ENCODE measurements at regions of chr21 and their contacts with region 1.

Region 1: GRCh38 chr21:29232601-29233546 is 65.8 kb upstream of the BACH1 start:
- DNase-seq: peak; percentile 48
- H3K4me3 Mint-ChIP-seq: no peak overlapping the region
- H3K27ac Mint-ChIP-seq: peak overlapping the region; percentile 39
- H3K4me1 Mint-ChIP-seq: peaks cover 36% of the 10 kb centered on the region
- H3K27me3 Mint-ChIP-seq: peaks cover 25% of the 10 kb centered on the region

Region 2: DNA sequence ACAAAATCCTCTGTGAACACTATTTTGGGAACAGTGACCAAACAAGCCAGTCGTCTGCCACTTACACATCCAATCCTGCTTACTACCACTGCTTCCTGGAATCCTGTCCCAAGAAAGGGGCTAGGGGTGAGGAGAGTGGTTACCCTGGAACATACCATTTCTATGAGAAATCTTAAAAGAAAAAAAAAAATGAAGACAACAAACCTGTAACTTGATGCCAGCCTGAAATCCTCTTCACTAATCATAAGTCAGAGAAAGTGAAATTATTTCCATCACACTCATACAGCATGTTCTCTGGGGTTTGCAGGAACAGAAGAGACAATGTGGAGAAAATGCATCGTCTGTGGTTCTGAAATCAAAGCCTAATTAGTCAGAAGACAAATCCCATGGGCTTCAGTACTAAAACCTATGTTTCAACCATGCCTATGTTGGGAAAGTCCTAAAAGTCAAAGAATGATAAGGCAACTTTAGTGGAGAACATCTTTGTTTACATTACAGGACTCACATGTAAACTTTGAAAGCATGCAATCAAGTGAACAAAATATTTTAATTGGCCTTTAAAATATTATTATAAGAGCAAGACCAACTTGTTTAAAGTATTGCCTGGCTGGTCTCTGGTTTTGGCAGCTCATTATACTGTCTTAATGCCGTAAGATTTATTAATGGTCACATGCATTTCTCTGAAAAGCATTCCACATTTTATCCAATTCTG is 460.9 kb before region 1 on chr21:
- intact Hi-C with region 1: loop called (anchors 10 kb)
- DNase-seq: no peak
- H3K4me3 Mint-ChIP-seq: no peak overlapping the region
- H3K27ac Mint-ChIP-seq: no peak overlapping the region
- H3K4me1 Mint-ChIP-seq: peaks cover 44% of the 10 kb centered on the region
- H3K27me3 Mint-ChIP-seq: no peaks in the 10 kb centered on the region

Region 3: DNA sequence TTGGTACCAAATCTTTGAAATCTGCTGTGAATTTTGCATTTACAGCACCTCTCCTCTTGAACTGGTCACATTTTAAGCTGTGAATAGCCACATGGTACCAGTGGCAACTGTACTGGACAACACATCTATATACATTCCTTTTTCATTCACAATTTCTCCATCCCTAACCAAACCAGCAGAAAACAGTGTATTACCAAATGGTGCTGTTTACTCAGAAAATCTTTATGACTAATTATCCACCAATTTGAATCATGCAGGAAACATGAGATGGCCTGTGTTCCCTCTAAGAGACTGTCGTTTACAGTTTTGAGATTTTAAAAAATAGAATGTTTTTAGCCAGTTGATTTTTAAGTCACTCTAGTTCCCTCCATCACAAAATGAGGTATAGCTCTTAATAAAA is 141.8 kb before region 1 on chr21:
- intact Hi-C with region 1: loop called (anchors 1 kb)
- DNase-seq: no peak
- H3K4me3 Mint-ChIP-seq: no peak overlapping the region
- H3K27ac Mint-ChIP-seq: no peak overlapping the region
- H3K4me1 Mint-ChIP-seq: peaks cover 17% of the 10 kb centered on the region
- H3K27me3 Mint-ChIP-seq: no peaks in the 10 kb centered on the region

Region 4: GRCh38 chr21:29208682-29209059 is 24.2 kb before region 1 on chr21:
- intact Hi-C with region 1: loop called (anchors 2 kb)
- DNase-seq: no peak
- H3K4me3 Mint-ChIP-seq: no peak overlapping the region
- H3K27ac Mint-ChIP-seq: no peak overlapping the region
- H3K4me1 Mint-ChIP-seq: peaks cover 10% of the 10 kb centered on the region
- H3K27me3 Mint-ChIP-seq: no peaks in the 10 kb centered on the region

Region 5: GRCh38 chr21:29372063-29372802 is 139.4 kb after region 1 on chr21:
- intact Hi-C with region 1: loop called (anchors 1 kb)
- DNase-seq: peak; percentile 89
- H3K4me3 Mint-ChIP-seq: no peak overlapping the region
- H3K27ac Mint-ChIP-seq: peak overlapping the region; percentile 57
- H3K4me1 Mint-ChIP-seq: peaks cover 18% of the 10 kb centered on the region
- H3K27me3 Mint-ChIP-seq: no peaks in the 10 kb centered on the region

Region 6: GRCh38 chr21:29462479-29462878 is 229.6 kb after region 1 on chr21:
- intact Hi-C with region 1: no loop called
- DNase-seq: no peak
- H3K4me3 Mint-ChIP-seq: no peak overlapping the region
- H3K27ac Mint-ChIP-seq: no peak overlapping the region
- H3K4me1 Mint-ChIP-seq: no peaks in the 10 kb centered on the region
- H3K27me3 Mint-ChIP-seq: no peaks in the 10 kb centered on the region